ENCODE measurements at regions of chr12 and their contacts with region 1.

Region 1: GRCh38 chr12:71694099-71694820 is 8.4 kb downstream of the TMEM19 start:
- DNase-seq: peak; percentile 89
- H3K4me3 ChIP-seq: peak overlapping the region; percentile 56
- H3K27ac ChIP-seq: peak overlapping the region; percentile 99
- H3K4me1 ChIP-seq: peaks cover 74% of the 10 kb centered on the region
- CTCF ChIP-seq: no peak

Region 2: GRCh38 chr12:70365648-70366518 is 1328.4 kb before region 1 on chr12 and contains the start of gene KCNMB4:
- CTCF ChIA-PET with region 1: no interaction called
- POLR2A ChIA-PET with region 1: no interaction called
- intact Hi-C with region 1: loop called (anchors 10 kb)
- DNase-seq: peak; percentile 82
- H3K4me3 ChIP-seq: peak within 1 kb of the TSS; percentile 74
- H3K27ac ChIP-seq: peak within 1 kb of the TSS; percentile 50
- H3K4me1 ChIP-seq: peaks cover 47% of the 10 kb centered on the region
- CTCF ChIP-seq: 0 out of 2 replicates have a peak, but pooled peaks have one; percentile 20
- total RNA-seq, gene KCNMB4: 3.0 and 5.8 TPM in 2 replicates

Region 3: GRCh38 chr12:71636704-71637115 is 57.5 kb before region 1 on chr12:
- CTCF ChIA-PET with region 1: no interaction called
- POLR2A ChIA-PET with region 1: no interaction called
- intact Hi-C with region 1: loop called (anchors 2 kb)
- DNase-seq: peak; percentile 83
- H3K4me3 ChIP-seq: no peak overlapping the region
- H3K27ac ChIP-seq: no peak overlapping the region
- H3K4me1 ChIP-seq: no peaks in the 10 kb centered on the region
- CTCF ChIP-seq: peak; percentile 94

Region 4: GRCh38 chr12:71652656-71653055 is 41.6 kb before region 1 on chr12:
- CTCF ChIA-PET with region 1: no interaction called
- POLR2A ChIA-PET with region 1: no interaction called
- intact Hi-C with region 1: no loop called
- DNase-seq: no peak
- H3K4me3 ChIP-seq: no peak overlapping the region
- H3K27ac ChIP-seq: no peak overlapping the region
- H3K4me1 ChIP-seq: no peaks in the 10 kb centered on the region
- CTCF ChIP-seq: no peak

Region 5: DNA sequence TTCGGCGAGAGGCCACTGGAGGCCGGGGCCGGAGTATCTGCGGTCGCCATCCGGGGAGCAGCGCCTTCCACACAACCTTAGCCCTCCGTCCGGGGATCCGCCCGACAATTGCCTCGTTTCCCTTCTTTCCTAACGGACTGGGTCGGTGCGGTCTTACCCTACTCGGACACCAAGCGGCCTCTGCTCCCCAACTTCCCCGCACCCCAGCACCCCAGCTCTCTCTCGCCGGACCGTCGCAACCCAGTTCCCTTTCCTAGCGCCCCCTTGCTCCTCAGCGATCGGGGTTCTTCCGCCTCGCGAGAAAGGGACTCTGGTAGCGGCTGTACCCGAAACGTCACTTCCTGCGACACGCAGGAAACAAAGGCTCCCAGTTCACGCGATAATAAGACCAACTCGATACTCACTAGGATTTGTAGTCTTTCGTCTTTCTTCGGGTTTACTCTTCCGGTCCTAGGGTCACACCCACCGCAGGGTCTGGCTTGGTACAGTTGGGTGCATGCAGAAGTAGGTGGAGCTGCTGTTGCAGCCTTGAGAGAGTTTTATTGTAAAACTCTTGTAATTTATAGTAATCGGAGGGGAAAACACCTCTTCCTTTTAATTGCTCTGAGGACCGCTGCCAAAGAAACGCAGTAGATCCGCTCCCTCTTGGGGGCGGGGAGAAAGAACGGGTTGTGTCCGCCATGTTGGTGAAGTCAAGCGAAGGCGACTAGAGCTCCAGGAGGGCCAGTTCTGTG is 30.5 kb before region 1 on chr12 and contains the start of gene ZFC3H1:
- CTCF ChIA-PET with region 1: interaction called, 4 read pairs
- POLR2A ChIA-PET with region 1: interaction called, 105 read pairs
- intact Hi-C with region 1: no loop called
- DNase-seq: peak; percentile 99
- H3K4me3 ChIP-seq: peak within 1 kb of the TSS; percentile 84
- H3K27ac ChIP-seq: peak within 1 kb of the TSS; percentile 87
- H3K4me1 ChIP-seq: peaks cover 31% of the 10 kb centered on the region
- CTCF ChIP-seq: peak; percentile 65
- total RNA-seq, gene ZFC3H1: 31.1 and 45.8 TPM in 2 replicates

Region 6: DNA sequence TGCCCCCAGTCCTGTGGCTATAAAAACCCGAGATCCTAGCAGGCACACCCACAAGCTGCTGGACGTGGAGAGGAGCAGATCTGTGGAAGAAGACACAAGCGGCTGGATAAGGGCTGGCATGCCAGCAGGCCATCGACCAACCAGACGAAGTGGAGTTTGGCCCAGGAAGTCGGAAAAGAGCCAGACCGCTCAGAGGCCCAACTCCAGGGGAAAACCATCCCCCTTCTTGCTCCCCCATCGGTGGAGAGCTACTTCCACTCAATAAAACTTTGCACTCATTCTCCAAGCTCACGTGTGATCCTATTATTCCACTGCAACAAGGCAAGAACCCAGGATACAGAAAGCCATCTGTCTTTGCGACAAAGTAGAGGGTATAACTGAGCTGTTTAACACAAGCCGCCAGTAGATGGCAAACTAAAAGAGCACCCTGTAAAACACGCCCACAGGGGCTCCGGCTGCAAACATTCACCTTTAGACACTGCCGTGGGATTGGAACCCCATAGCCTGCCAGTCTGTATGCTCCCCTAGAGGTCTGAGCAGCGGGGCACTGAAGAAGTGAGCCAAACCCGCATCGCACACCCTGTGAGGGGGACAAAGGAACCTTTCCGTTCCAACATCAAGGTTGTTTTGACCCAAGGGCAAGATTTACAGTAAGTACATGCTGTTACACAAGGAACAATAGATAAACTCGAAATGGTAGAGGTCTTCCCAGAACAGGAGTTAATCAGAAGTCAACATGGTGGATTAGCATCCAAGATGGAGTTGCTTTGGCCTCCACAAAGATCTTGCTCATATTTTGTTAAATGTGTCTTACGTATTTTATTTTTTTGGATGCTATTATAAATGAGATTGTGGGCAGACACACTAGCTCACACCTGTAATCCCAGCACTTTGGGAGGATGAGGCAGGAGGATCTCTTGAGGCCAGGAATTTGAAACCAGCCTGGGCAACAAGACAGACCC is 37.8 kb after region 1 on chr12:
- CTCF ChIA-PET with region 1: no interaction called
- POLR2A ChIA-PET with region 1: interaction called, 3 read pairs
- intact Hi-C with region 1: loop called (anchors 5 kb)
- DNase-seq: peak; percentile 80
- H3K4me3 ChIP-seq: peak overlapping the region; percentile 16
- H3K27ac ChIP-seq: no peak overlapping the region
- H3K4me1 ChIP-seq: peaks cover 17% of the 10 kb centered on the region
- CTCF ChIP-seq: peak; percentile 77

Region 7: DNA sequence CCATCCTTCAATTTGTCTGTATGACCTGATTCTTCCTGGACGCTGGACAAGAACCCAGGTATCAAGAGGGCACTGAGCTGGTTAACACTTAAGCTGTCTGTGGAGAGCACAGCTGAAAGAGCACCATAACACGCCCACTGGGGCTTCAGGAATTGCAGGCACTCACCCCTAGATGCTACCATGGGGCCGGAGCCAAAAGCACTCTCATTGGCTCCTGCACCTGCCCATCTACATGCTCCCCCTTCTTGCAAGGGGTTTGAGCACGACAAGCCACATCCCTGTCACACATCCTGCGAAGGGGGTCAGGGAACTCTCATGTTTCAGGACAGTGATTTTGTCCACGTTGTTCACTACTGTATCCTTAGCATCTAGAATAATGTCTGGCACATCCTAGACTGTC is 110.2 kb after region 1 on chr12:
- CTCF ChIA-PET with region 1: no interaction called
- POLR2A ChIA-PET with region 1: no interaction called
- intact Hi-C with region 1: no loop called
- DNase-seq: no peak
- H3K4me3 ChIP-seq: no peak overlapping the region
- H3K27ac ChIP-seq: no peak overlapping the region
- H3K4me1 ChIP-seq: no peaks in the 10 kb centered on the region
- CTCF ChIP-seq: no peak